SK-N-SH (cell line): ENCODE measurements at regions of chr9 and their contacts with region 1.

Region 1: DNA sequence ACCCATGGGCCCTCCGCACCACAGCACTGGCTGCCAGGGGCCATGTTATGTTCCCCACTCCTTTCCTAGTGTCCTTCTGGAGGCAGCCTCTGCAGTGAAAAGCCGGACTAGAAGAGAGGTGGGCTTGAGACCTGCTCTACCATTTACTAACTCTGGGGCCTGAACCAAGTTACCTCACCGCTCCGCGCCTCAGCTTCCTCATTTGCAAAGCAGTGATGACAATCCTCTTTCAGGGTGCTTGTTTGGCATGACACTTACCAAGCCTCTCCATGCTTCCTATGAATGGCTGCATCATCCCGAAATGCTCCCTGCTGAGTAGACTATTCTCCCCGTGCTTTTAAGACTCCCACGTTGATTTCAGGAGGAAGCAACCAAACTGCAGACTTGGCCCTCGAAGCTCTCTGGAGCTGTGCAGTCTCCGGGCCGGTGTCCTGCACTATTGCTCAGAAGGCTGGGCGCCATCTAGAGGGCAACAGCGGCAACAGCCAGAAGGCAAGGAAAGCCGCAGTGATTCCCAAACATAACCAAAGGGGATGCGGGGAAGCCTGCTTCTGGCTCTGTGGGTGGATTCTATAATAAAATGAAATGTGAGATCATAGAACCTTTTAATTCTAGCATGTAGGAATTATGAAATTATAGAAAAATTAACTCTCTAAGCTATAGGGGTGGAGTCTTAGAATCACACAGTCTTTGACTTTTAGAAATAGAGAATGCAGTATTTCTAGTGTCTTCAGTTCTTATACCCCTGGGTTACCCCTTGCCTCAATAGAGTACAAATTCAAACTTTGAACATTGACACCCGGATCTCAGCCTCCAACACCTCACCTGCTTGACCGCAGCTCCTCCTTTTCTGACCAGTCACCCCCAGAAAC is 599.8 kb upstream of the BRINP1 start:
- DNase-seq: peak; percentile 76
- H3K4me3 ChIP-seq: no peak overlapping the region; a peak in 1 of 4 replicates
- H3K27ac ChIP-seq: no peak overlapping the region
- H3K4me1 ChIP-seq: no peaks in the 10 kb centered on the region; a peak in 1 of 4 replicates
- H3K27me3 ChIP-seq: no peaks in the 10 kb centered on the region
- CTCF ChIP-seq: peak; percentile 94
- EP300 ChIP-seq: no peak
- RAD21 ChIP-seq: peak; percentile 86

Region 2: GRCh38 chr9:119556129-119556875 is 412.8 kb before region 1 on chr9:
- CTCF ChIA-PET with region 1: interaction called, 46 read pairs
- POLR2A ChIA-PET with region 1: no interaction called
- DNase-seq: peak; percentile 81
- H3K4me3 ChIP-seq: peak overlapping the region; percentile 41 to 62
- H3K27ac ChIP-seq: peak overlapping the region in 1 of 2 experiments; percentile 86; a peak in 2 of 4 replicates
- H3K4me1 ChIP-seq: peaks cover 0 to 10% of the 10 kb centered on the region in 2 experiments; a peak in 1 of 4 replicates
- H3K27me3 ChIP-seq: no peaks in the 10 kb centered on the region
- CTCF ChIP-seq: peak; percentile 86
- EP300 ChIP-seq: no peak
- RAD21 ChIP-seq: peak; percentile 76

Region 3: GRCh38 chr9:119951090-119951489 is 18.0 kb before region 1 on chr9:
- CTCF ChIA-PET with region 1: interaction called, 13 read pairs
- POLR2A ChIA-PET with region 1: no interaction called
- DNase-seq: no peak
- H3K4me3 ChIP-seq: no peak overlapping the region
- H3K27ac ChIP-seq: no peak overlapping the region; a peak in 1 of 4 replicates
- H3K4me1 ChIP-seq: no peaks in the 10 kb centered on the region
- H3K27me3 ChIP-seq: no peaks in the 10 kb centered on the region
- CTCF ChIP-seq: no peak
- EP300 ChIP-seq: no peak
- RAD21 ChIP-seq: no peak

Region 4: GRCh38 chr9:119991797-119992196 is 22.7 kb after region 1 on chr9:
- CTCF ChIA-PET with region 1: interaction called, 16 read pairs
- POLR2A ChIA-PET with region 1: no interaction called
- DNase-seq: no peak
- H3K4me3 ChIP-seq: no peak overlapping the region
- H3K27ac ChIP-seq: no peak overlapping the region
- H3K4me1 ChIP-seq: no peaks in the 10 kb centered on the region; a peak in 1 of 4 replicates
- H3K27me3 ChIP-seq: no peaks in the 10 kb centered on the region
- CTCF ChIP-seq: no peak
- EP300 ChIP-seq: no peak
- RAD21 ChIP-seq: no peak